Natural killer cell (primary cell): ENCODE measurements at regions of chr2 and their contacts with region 1.

Region 1: GRCh38 chr2:180413336-180413735 is 406.2 kb upstream of the CWC22 start:
- DNase-seq: no peak
- ATAC-seq: no peak
- H3K4me3 ChIP-seq: no peak overlapping the region
- H3K4me3 Mint-ChIP-seq: no peak overlapping the region
- H3K27ac ChIP-seq: no peak overlapping the region
- H3K27ac Mint-ChIP-seq: no peak overlapping the region
- H3K4me1 ChIP-seq: no peaks in the 10 kb centered on the region
- H3K4me1 Mint-ChIP-seq: no peaks in the 10 kb centered on the region
- H3K27me3 ChIP-seq: no peaks in the 10 kb centered on the region
- H3K27me3 Mint-ChIP-seq: no peaks in the 10 kb centered on the region
- CTCF ChIP-seq: no peak

Region 2: GRCh38 chr2:180443888-180444287 is 30.6 kb after region 1 on chr2:
- intact Hi-C with region 1: loop called (anchors 1 kb)
- DNase-seq: no peak
- ATAC-seq: no peak
- H3K4me3 ChIP-seq: no peak overlapping the region
- H3K4me3 Mint-ChIP-seq: no peak overlapping the region
- H3K27ac ChIP-seq: no peak overlapping the region
- H3K27ac Mint-ChIP-seq: no peak overlapping the region
- H3K4me1 ChIP-seq: no peaks in the 10 kb centered on the region
- H3K4me1 Mint-ChIP-seq: no peaks in the 10 kb centered on the region
- H3K27me3 ChIP-seq: no peaks in the 10 kb centered on the region
- H3K27me3 Mint-ChIP-seq: no peaks in the 10 kb centered on the region
- CTCF ChIP-seq: no peak